ENCODE measurements at regions of chr3 and their contacts with region 1.

Region 1: GRCh38 chr3:45224824-45225464 is 1.1 kb downstream of the TMEM158 start:
- DNase-seq: peak; percentile 46 to 90 (median 68)
- ATAC-seq: peak; percentile 61 to 84 (median 80)
- H3K4me3 ChIP-seq: peak overlapping the region in 3 of 4 donors; percentile 30 to 48 (median 46)
- H3K27ac ChIP-seq: no peak overlapping the region
- H3K4me1 ChIP-seq: no peaks in the 10 kb centered on the region
- H3K27me3 ChIP-seq: no peaks in the 10 kb centered on the region
- CTCF ChIP-seq: peak in 2 of 4 donors; percentile 21 to 24

Region 2: DNA sequence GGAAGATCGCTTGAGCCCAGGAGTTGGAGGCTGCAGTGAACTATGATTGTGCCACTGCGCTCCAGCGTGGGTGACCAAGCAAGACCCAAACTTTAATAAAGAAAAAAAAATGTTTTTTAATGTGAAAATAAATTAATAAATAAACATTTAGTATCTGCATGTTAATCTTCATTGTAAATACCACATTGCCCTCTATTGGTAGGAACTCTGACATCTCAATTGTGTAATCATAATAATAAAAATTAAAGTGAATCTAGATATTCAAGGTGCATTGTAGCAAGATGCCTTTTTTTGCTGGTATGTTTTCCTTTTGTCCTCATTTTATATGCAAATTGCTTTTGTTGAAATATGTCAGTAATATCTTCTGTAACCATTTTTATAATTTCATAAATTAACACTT is 274.6 kb after region 1 on chr3:
- intact Hi-C with region 1: loop called in 1 of 3 experiments (anchors 10 kb)
- DNase-seq: no peak
- ATAC-seq: peak in 3 of 4 donors; percentile 46 to 67 (median 51)
- H3K4me3 ChIP-seq: no peak overlapping the region
- H3K27ac ChIP-seq: no peak overlapping the region
- H3K4me1 ChIP-seq: no peaks in the 10 kb centered on the region
- H3K27me3 ChIP-seq: no peaks in the 10 kb centered on the region
- CTCF ChIP-seq: peak in 2 of 4 donors; percentile 28 to 32

Measured in pancreas (tissue), 10 donors.